Dorsolateral prefrontal cortex (tissue), 120 donors: ENCODE measurements at regions of chr1 and their contacts with region 1.

Region 1: GRCh38 chr1:151070474-151071276 is at the start of gene GABPB2:
- DNase-seq: peak; percentile 84 to 94 (median 90)
- H3K4me3 ChIP-seq: peak within 1 kb of the TSS; percentile 52 to 98 (median 81)
- H3K27ac ChIP-seq: peak within 1 kb of the TSS; percentile 97 to 100 (median 100)
- H3K27me3 ChIP-seq: no peaks in the 10 kb centered on the region
- CTCF ChIP-seq: peak; percentile 56 to 98 (median 87)
- total RNA-seq, gene GABPB2: 11.6 to 37.2 (median 20.4) TPM

Region 2: GRCh38 chr1:151024540-151025146 is 46.0 kb before region 1 on chr1:
- intact Hi-C with region 1: loop called in 1 of 2 experiments (anchors 10 kb)
- DNase-seq: peak; percentile 63 to 86 (median 78)
- H3K4me3 ChIP-seq: no peak overlapping the region
- H3K27ac ChIP-seq: peak overlapping the region in 42 of 59 donors; percentile 5 to 83 (median 48)
- H3K27me3 ChIP-seq: no peaks in the 10 kb centered on the region
- CTCF ChIP-seq: peak; percentile 40 to 88 (median 75)

Region 3: DNA sequence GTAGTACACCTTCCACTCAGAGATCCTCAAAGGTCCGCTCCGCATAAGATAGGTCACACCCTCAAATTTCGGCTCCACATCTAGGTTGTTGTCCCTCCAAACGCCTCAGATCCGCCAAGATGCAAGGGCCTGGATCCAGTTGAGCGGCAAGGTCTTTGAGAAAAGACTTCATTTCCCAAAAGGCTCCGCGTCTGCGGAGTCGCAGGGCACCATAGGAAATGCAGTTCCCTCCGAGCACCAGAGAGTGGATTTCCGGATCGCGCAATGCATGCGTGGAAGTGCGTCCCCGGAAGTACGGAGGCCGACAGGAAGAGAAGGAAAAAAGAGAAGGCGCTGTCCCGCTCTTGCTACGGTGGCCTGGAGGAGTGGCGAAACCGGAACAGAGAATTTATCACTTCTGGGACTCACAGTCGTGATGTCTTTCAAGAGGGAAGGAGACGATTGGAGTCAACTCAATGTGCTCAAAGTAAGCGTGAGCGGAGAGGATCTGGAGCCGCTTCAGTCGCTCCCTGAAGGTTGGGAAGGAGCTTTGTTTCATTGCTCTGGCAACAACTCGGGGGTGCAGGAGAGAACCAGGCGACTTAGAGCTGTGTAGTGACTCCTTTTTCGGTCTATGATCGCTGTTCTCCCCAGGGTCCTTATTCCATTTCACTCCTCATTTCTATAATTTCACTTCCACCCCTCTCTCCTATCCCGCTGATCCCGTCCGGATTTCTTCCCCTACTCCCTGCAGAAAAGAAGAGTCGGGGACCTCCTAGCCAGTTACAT is 95.2 kb after region 1 on chr1 and contains the starts of genes LYSMD1 and SCNM1:
- intact Hi-C with region 1: loop called in 1 of 2 experiments (anchors 5 kb)
- DNase-seq: peak; percentile 94 to 98 (median 96)
- H3K4me3 ChIP-seq: peak within 1 kb of the TSS; percentile 57 to 98 (median 81)
- H3K27ac ChIP-seq: peak within 1 kb of the TSS; percentile 30 to 98 (median 89)
- H3K27me3 ChIP-seq: no peaks in the 10 kb centered on the region
- CTCF ChIP-seq: peak in 46 of 56 donors; percentile 7 to 64 (median 40)
- total RNA-seq, gene LYSMD1: 11.8 to 24.4 (median 17.1) TPM
- total RNA-seq, gene SCNM1: 20.8 to 38.5 (median 28.7) TPM